Naive thymus-derived CD4-positive, alpha-beta T cell (primary cell): ENCODE measurements at regions of chr15 and their contacts with region 1.

Region 1: GRCh38 chr15:40440743-40441564 is at the start of gene BAHD1:
- DNase-seq: peak; percentile 85 to 97 (median 89)
- ATAC-seq: peak; percentile 94
- H3K4me3 ChIP-seq: peak within 1 kb of the TSS; percentile 60
- H3K4me3 Mint-ChIP-seq: peak within 1 kb of the TSS; percentile 88 to 99 (median 94)
- H3K27ac ChIP-seq: peak within 1 kb of the TSS; percentile 77
- H3K27ac Mint-ChIP-seq: peak within 1 kb of the TSS in 8 of 9 donors; percentile 71 to 93 (median 84)
- H3K4me1 ChIP-seq: peaks cover 20 to 44% of the 10 kb centered on the region in 2 donors
- H3K4me1 Mint-ChIP-seq: peaks cover 46 to 64% (median 60%) of the 10 kb centered on the region in 7 donors
- H3K27me3 ChIP-seq: peaks cover 0 to 5% of the 10 kb centered on the region in 2 donors
- H3K27me3 Mint-ChIP-seq: peaks cover 15 to 65% (median 22%) of the 10 kb centered on the region in 5 donors
- total RNA-seq, gene BAHD1: 28.4 to 48.8 (median 31.2) TPM

Region 2: DNA sequence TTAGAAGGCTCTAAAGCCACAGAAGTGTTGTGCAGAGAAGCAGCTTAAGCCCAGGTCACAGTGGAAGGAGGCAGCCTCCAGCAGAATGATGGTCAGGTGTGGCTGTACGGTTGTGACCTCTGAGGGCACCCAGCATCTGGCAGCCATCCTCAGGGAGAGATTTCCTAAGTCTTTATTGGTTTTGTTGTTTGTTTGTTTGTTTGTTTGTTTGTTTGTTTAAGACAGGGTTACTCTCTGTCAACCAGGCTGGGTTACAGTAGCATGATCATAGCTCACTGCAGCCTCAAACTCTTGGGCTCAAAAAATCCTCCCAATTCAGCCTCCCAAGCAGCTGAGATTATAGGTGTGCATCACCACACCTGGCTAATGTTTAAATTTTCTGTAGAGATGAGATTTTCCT is 914.7 kb before region 1 on chr15:
- CTCF ChIA-PET with region 1: no interaction called
- POLR2A ChIA-PET with region 1: no interaction called
- intact Hi-C with region 1: no loop called
- DNase-seq: no peak
- ATAC-seq: no peak
- H3K4me3 ChIP-seq: no peak overlapping the region
- H3K4me3 Mint-ChIP-seq: no peak overlapping the region
- H3K27ac ChIP-seq: no peak overlapping the region
- H3K27ac Mint-ChIP-seq: no peak overlapping the region
- H3K4me1 ChIP-seq: no peaks in the 10 kb centered on the region
- H3K4me1 Mint-ChIP-seq: no peaks in the 10 kb centered on the region
- H3K27me3 ChIP-seq: no peaks in the 10 kb centered on the region
- H3K27me3 Mint-ChIP-seq: peaks cover 5 to 35% (median 14%) of the 10 kb centered on the region in 5 donors

Region 3: GRCh38 chr15:40357723-40358470 is 83.1 kb before region 1 on chr15 and contains the start of gene DISP2:
- CTCF ChIA-PET with region 1: no interaction called
- POLR2A ChIA-PET with region 1: no interaction called
- intact Hi-C with region 1: loop called in 1 of 2 experiments (anchors 1 kb)
- DNase-seq: peak; percentile 80 to 97 (median 91)
- ATAC-seq: peak; percentile 94
- H3K4me3 ChIP-seq: peak within 1 kb of the TSS; percentile 63
- H3K4me3 Mint-ChIP-seq: peak within 1 kb of the TSS; percentile 75 to 90 (median 83)
- H3K27ac ChIP-seq: no peak within 1 kb of the TSS
- H3K27ac Mint-ChIP-seq: peak within 1 kb of the TSS in 2 of 9 donors; percentile 38 to 48
- H3K4me1 ChIP-seq: peaks cover 0 to 12% of the 10 kb centered on the region in 2 donors
- H3K4me1 Mint-ChIP-seq: peaks cover 7 to 15% (median 13%) of the 10 kb centered on the region in 7 donors
- H3K27me3 ChIP-seq: no peaks in the 10 kb centered on the region
- H3K27me3 Mint-ChIP-seq: peaks cover 0 to 30% (median 9%) of the 10 kb centered on the region in 5 donors
- total RNA-seq, gene DISP2: 0.05 to 0.51 (median 0.07) TPM in 4 of 5 experiments, not detected in the other

Region 4: GRCh38 chr15:40405501-40406381 is 35.2 kb before region 1 on chr15 and contains the start of gene IVD:
- CTCF ChIA-PET with region 1: no interaction called
- POLR2A ChIA-PET with region 1: interaction called, 7 read pairs
- intact Hi-C with region 1: loop called in 1 of 2 experiments (anchors 1 kb)
- DNase-seq: peak; percentile 67 to 88 (median 79)
- ATAC-seq: peak; percentile 99
- H3K4me3 ChIP-seq: peak within 1 kb of the TSS; percentile 49
- H3K4me3 Mint-ChIP-seq: peak within 1 kb of the TSS; percentile 79 to 94 (median 92)
- H3K27ac ChIP-seq: peak within 1 kb of the TSS; percentile 70
- H3K27ac Mint-ChIP-seq: peak within 1 kb of the TSS; percentile 38 to 92 (median 90)
- H3K4me1 ChIP-seq: peaks cover 6 to 15% of the 10 kb centered on the region in 2 donors
- H3K4me1 Mint-ChIP-seq: peaks cover 9 to 49% (median 30%) of the 10 kb centered on the region in 7 donors
- H3K27me3 ChIP-seq: no peaks in the 10 kb centered on the region
- H3K27me3 Mint-ChIP-seq: no peaks in the 10 kb centered on the region
- total RNA-seq, gene IVD: 47.2 to 81.8 (median 64.7) TPM

Region 5: DNA sequence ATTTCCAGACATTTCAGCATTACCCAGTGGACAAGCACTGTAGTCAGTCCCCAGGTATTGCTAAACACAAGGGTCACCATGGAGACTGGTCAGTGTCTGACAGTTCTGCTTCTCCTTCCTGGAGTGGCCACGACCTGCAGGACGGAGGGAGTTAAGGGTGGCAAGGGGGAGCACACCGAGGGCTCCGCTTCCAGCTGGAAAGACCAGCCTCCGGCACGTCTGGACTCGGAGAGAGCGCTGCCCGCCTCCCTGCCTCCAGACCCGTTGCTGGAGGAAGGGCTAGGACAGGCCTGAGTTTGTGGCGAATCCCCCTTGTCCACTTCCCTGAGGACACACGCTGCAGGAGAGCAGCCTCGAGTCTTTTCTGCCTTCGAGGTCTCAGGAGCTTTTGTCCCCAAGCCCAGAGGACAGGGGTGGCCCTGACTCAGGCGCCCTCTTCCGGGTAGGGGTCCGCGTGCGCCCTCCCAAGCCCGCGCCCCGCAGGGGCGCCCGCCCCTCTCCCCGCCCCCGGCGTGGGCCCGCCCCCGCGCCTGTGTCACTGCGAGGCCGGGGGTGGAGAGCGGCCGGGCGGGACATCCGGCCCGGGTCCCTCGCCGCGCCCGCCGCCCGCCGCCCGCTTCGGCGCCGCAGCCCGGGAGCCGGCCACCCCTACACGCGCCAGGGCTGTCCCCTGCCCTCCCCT is 29.6 kb after region 1 on chr15 and contains the start of gene CHST14:
- CTCF ChIA-PET with region 1: interaction called, 7 read pairs
- POLR2A ChIA-PET with region 1: interaction called, 4 read pairs
- intact Hi-C with region 1: loop called (anchors 1 to 2 kb)
- DNase-seq: peak; percentile 24 to 68 (median 53)
- ATAC-seq: peak; percentile 88
- H3K4me3 ChIP-seq: peak within 1 kb of the TSS; percentile 89
- H3K4me3 Mint-ChIP-seq: peak within 1 kb of the TSS; percentile 90 to 96 (median 92)
- H3K27ac ChIP-seq: peak within 1 kb of the TSS; percentile 81
- H3K27ac Mint-ChIP-seq: peak within 1 kb of the TSS; percentile 80 to 95 (median 87)
- H3K4me1 ChIP-seq: peaks cover 8 to 16% of the 10 kb centered on the region in 2 donors
- H3K4me1 Mint-ChIP-seq: peaks cover 15 to 47% (median 37%) of the 10 kb centered on the region in 7 donors
- H3K27me3 ChIP-seq: no peaks in the 10 kb centered on the region
- H3K27me3 Mint-ChIP-seq: peaks cover 0 to 3% (median 0%) of the 10 kb centered on the region in 5 donors
- total RNA-seq, gene CHST14: 7.3 to 12.5 (median 10.8) TPM

Region 6: GRCh38 chr15:40516322-40516721 is 75.4 kb after region 1 on chr15:
- CTCF ChIA-PET with region 1: no interaction called
- POLR2A ChIA-PET with region 1: no interaction called
- intact Hi-C with region 1: no loop called
- DNase-seq: no peak
- ATAC-seq: no peak
- H3K4me3 ChIP-seq: no peak overlapping the region
- H3K4me3 Mint-ChIP-seq: no peak overlapping the region
- H3K27ac ChIP-seq: no peak overlapping the region
- H3K27ac Mint-ChIP-seq: no peak overlapping the region
- H3K4me1 ChIP-seq: peaks cover 0 to 6% of the 10 kb centered on the region in 2 donors
- H3K4me1 Mint-ChIP-seq: peaks cover 8 to 18% (median 10%) of the 10 kb centered on the region in 7 donors
- H3K27me3 ChIP-seq: peaks cover 0 to 8% of the 10 kb centered on the region in 2 donors
- H3K27me3 Mint-ChIP-seq: peaks cover 22 to 45% (median 24%) of the 10 kb centered on the region in 5 donors

Region 7: GRCh38 chr15:40564591-40565332 is 123.8 kb after region 1 on chr15 and contains the start of gene CCDC32:
- CTCF ChIA-PET with region 1: no interaction called
- POLR2A ChIA-PET with region 1: interaction called, 4 read pairs
- intact Hi-C with region 1: loop called (anchors 1 to 2 kb)
- DNase-seq: peak; percentile 75 to 96 (median 93)
- ATAC-seq: peak; percentile 95
- H3K4me3 ChIP-seq: peak within 1 kb of the TSS; percentile 85
- H3K4me3 Mint-ChIP-seq: peak within 1 kb of the TSS; percentile 80 to 97 (median 96)
- H3K27ac ChIP-seq: peak within 1 kb of the TSS; percentile 96
- H3K27ac Mint-ChIP-seq: peak within 1 kb of the TSS; percentile 82 to 98 (median 95)
- H3K4me1 ChIP-seq: peaks cover 11 to 15% of the 10 kb centered on the region in 2 donors
- H3K4me1 Mint-ChIP-seq: peaks cover 35 to 57% (median 55%) of the 10 kb centered on the region in 7 donors
- H3K27me3 ChIP-seq: no peaks in the 10 kb centered on the region
- H3K27me3 Mint-ChIP-seq: peaks cover 0 to 8% (median 0%) of the 10 kb centered on the region in 5 donors
- total RNA-seq, gene CCDC32: 22.4 to 37.3 (median 33.3) TPM

Region 8: GRCh38 chr15:40684381-40684780 is 243.4 kb after region 1 on chr15:
- CTCF ChIA-PET with region 1: no interaction called
- POLR2A ChIA-PET with region 1: no interaction called
- intact Hi-C with region 1: loop called in 1 of 2 experiments (anchors 5 kb)
- DNase-seq: no peak
- ATAC-seq: no peak
- H3K4me3 ChIP-seq: no peak overlapping the region
- H3K4me3 Mint-ChIP-seq: no peak overlapping the region
- H3K27ac ChIP-seq: no peak overlapping the region
- H3K27ac Mint-ChIP-seq: peak overlapping the region in 3 of 9 donors; percentile 41 to 57 (median 47)
- H3K4me1 ChIP-seq: no peaks in the 10 kb centered on the region
- H3K4me1 Mint-ChIP-seq: peaks cover 0 to under 1% (median 0%) of the 10 kb centered on the region in 7 donors
- H3K27me3 ChIP-seq: no peaks in the 10 kb centered on the region
- H3K27me3 Mint-ChIP-seq: peaks cover 0 to 3% (median 0%) of the 10 kb centered on the region in 5 donors